ENCODE measurements at regions of chr14 and their contacts with region 1.

Region 1: DNA sequence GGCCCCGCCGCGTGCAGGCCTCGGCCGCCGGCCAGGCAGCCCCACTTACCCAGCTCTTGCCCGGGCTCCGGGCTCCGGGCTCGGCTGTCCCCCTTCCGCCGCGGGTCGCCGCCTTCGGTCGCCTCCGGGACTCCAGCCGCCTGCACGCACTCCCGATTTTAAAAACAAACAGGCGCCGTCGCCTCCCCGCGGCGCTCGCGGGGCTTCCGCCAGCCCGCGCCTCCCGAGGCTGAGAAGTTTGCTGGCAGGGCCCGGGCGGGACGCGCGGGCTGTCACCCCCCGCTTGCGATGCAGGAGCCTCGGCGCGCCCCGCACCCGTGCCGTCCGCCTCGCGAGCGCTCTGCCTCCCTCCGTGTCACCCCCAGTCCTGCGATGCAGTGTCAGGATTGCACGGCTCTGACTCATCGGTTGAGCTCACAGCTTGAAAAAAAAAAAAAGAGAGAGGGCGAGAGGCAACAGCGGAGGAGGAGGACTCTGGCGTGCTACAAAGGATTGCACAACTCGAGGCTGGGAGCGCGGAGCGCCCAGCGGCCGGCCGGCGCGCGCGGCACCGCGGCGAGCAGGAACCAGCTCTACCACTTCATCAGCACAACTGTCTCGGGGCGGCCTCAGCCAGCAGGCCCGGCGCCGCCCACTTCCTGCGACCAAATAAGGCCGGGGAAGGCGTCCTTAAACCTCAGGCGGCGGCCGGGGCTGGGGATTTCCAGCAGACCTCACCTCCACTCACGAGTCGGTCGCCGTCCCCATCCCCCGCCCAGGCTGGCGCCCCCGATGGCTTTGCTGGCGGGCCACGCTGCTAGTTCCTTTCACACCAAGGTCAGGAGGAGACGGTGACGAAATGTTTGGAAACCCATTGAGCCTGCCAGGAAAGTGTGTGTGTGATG is 45.8 kb upstream of the PNMA1 start:
- DNase-seq: peak; percentile 63 to 95 (median 72)
- ATAC-seq: peak; percentile 81
- H3K4me3 ChIP-seq: peak overlapping the region; percentile 76
- H3K27ac ChIP-seq: peak overlapping the region; percentile 92
- H3K4me1 ChIP-seq: peaks cover 65 to 73% of the 10 kb centered on the region in 2 experiments
- H3K27me3 ChIP-seq: no peaks in the 10 kb centered on the region
- CTCF ChIP-seq: no peak; a peak in 1 of 6 replicates
- EP300 ChIP-seq: peak; percentile 19; the same call in 1 of the 2 replicates
- POLR2A ChIP-seq: peak; percentile 86
- RAD21 ChIP-seq: peak in 1 of 2 experiments; percentile 20; a peak in 1 of 4 replicates

Region 2: GRCh38 chr14:73728717-73729330 is 31.1 kb before region 1 on chr14:
- CTCF ChIA-PET with region 1: interaction called, 3 read pairs
- POLR2A ChIA-PET with region 1: interaction called, 6 read pairs
- in situ Hi-C with region 1: no loop called
- intact Hi-C with region 1: loop called (anchors 2 kb)
- DNase-seq: peak; percentile 75 to 89 (median 78)
- ATAC-seq: peak; percentile 79
- H3K4me3 ChIP-seq: no peak overlapping the region
- H3K27ac ChIP-seq: peak overlapping the region; percentile 67
- H3K4me1 ChIP-seq: peaks cover 41% of the 10 kb centered on the region in 2 experiments
- H3K27me3 ChIP-seq: no peaks in the 10 kb centered on the region
- CTCF ChIP-seq: peak; percentile 83 to 89 (median 85)
- EP300 ChIP-seq: no peak
- POLR2A ChIP-seq: no peak
- RAD21 ChIP-seq: peak; percentile 86 to 92

Region 3: DNA sequence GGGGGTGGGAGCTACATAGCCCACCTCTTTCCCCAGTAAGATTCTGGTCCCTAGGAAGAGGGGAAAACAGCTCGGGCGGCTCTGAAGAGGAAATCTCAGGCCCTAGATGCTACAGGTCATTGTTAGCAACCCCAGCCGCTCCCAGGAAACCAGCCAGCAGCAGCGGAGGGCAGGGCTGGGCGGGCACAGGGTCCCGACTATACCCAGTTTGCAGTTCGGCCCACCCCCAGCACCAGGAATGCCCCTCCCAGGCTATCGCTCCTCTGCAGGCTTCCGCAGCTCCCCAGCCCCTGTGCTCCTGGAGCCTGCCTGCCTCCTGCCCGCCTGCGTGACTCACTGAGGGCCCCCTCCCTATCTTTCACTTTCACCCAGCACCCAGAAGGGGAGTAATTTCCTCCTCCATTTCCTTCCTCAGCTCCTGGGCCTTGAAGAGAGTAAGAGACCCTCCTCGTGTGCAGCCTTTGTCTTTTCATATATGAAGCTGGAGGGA is 18.5 kb before region 1 on chr14:
- CTCF ChIA-PET with region 1: no interaction called
- POLR2A ChIA-PET with region 1: interaction called, 80 read pairs
- in situ Hi-C with region 1: no loop called
- intact Hi-C with region 1: loop called (anchors 2 kb)
- DNase-seq: peak; percentile 90 to 93 (median 92)
- ATAC-seq: peak; percentile 82
- H3K4me3 ChIP-seq: peak overlapping the region; percentile 17; the same call in 1 of the 2 replicates
- H3K27ac ChIP-seq: peak overlapping the region; percentile 86
- H3K4me1 ChIP-seq: peaks cover 56 to 78% of the 10 kb centered on the region in 2 experiments
- H3K27me3 ChIP-seq: no peaks in the 10 kb centered on the region
- CTCF ChIP-seq: peak; percentile 13 to 15 (median 15); a peak in 2 of 6 replicates
- EP300 ChIP-seq: peak; percentile 85
- POLR2A ChIP-seq: no peak
- RAD21 ChIP-seq: no peak

Region 4: GRCh38 chr14:73771848-73772638 is 12.1 kb after region 1 on chr14:
- CTCF ChIA-PET with region 1: no interaction called
- POLR2A ChIA-PET with region 1: interaction called, 11 read pairs
- in situ Hi-C with region 1: no loop called
- intact Hi-C with region 1: no loop called
- DNase-seq: peak; percentile 81 to 94 (median 86)
- ATAC-seq: peak; percentile 91
- H3K4me3 ChIP-seq: no peak overlapping the region
- H3K27ac ChIP-seq: peak overlapping the region; percentile 76
- H3K4me1 ChIP-seq: peaks cover 38 to 45% of the 10 kb centered on the region in 2 experiments
- H3K27me3 ChIP-seq: no peaks in the 10 kb centered on the region
- CTCF ChIP-seq: no peak
- EP300 ChIP-seq: peak; percentile 83
- POLR2A ChIP-seq: no peak
- RAD21 ChIP-seq: peak in 1 of 2 experiments; percentile 2; a peak in 1 of 4 replicates

Region 5: DNA sequence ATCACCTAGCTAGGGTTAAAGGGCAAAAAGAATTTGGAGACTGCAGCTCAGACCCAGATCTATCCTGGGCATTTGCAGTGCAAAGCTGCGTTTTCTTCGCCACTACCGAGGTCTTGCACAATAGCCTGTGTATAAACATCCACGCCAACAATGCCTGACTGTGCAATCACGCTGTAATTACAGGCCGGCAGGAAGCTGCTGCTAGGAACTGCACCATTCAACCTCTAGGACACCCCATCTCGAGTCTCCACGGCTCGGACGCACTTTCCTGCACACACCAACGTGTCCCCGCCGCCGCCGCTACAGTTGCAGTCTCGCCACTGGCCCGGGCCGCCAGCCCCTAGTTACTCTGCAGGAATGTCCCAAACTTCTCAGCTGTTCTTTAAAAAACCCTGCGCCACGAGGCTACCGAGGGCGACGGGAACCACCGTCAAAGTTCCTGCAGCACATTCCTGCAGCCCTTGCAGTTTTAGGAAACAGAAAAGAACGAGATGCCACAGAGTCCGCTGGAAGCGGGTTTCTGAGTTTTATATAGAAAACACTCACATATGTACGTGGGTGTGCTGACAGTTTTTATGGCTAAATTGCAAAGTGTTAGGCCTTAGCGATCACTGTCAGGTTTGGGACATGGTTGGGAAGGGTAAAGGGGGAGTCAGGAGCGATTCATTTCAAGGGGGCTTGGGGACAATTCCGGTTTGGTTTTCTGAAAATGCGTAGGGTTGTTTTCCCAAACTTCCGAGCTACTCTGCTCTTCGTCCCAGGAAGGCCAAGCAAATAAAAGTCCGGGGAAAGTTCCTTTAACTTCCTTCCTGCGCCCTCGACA is 26.1 kb after region 1 on chr14:
- CTCF ChIA-PET with region 1: no interaction called
- POLR2A ChIA-PET with region 1: interaction called, 31 read pairs
- in situ Hi-C with region 1: no loop called
- intact Hi-C with region 1: loop called (anchors 2 kb)
- DNase-seq: peak; percentile 46 to 77 (median 50)
- ATAC-seq: peak; percentile 85
- H3K4me3 ChIP-seq: peak overlapping the region; percentile 70
- H3K27ac ChIP-seq: peak overlapping the region; percentile 97
- H3K4me1 ChIP-seq: peaks cover 43 to 49% of the 10 kb centered on the region in 2 experiments
- H3K27me3 ChIP-seq: no peaks in the 10 kb centered on the region
- CTCF ChIP-seq: peak in 1 of 3 experiments; percentile 17; a peak in 1 of 6 replicates
- EP300 ChIP-seq: peak; percentile 63
- POLR2A ChIP-seq: peak; percentile 63
- RAD21 ChIP-seq: no peak; a peak in 1 of 4 replicates

Region 6: GRCh38 chr14:73851644-73852382 is 91.9 kb after region 1 on chr14 and contains the start of gene PTGR2:
- CTCF ChIA-PET with region 1: no interaction called
- POLR2A ChIA-PET with region 1: interaction called, 11 read pairs
- in situ Hi-C with region 1: no loop called
- intact Hi-C with region 1: no loop called
- DNase-seq: peak; percentile 90 to 94 (median 91)
- ATAC-seq: peak; percentile 93
- H3K4me3 ChIP-seq: peak within 1 kb of the TSS; percentile 45
- H3K27ac ChIP-seq: peak within 1 kb of the TSS; percentile 82
- H3K4me1 ChIP-seq: peaks cover 4 to 12% of the 10 kb centered on the region in 2 experiments; a peak in 4 of 5 replicates
- H3K27me3 ChIP-seq: no peaks in the 10 kb centered on the region
- CTCF ChIP-seq: 0 out of 6 replicates have a peak, but pooled peaks of 1 of the 3 experiments have one; percentile 7
- EP300 ChIP-seq: no peak
- POLR2A ChIP-seq: peak; percentile 88
- RAD21 ChIP-seq: no peak
- polyA plus RNA-seq, gene PTGR2: 13.0 to 20.1 TPM

Region 7: DNA sequence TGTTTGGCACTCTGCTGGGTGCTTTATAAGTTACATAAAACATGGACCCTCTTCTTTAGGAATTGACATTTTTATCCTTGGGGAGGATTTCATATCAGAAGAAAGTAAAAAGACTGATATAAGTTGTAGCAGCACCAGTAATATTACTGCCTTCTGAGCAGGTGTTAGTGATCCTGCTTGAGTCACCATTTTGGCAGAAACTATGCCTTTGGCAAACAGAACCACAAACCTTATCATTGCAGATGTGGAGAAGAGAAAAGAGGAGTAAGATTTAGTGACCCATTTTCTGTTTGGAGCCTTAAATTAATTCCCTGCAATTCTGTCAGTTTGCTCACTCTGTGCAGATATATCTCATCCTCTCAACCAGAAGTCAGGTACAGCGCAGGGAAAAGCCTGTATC is 149.7 kb after region 1 on chr14:
- CTCF ChIA-PET with region 1: no interaction called
- POLR2A ChIA-PET with region 1: no interaction called
- in situ Hi-C with region 1: no loop called
- intact Hi-C with region 1: no loop called
- DNase-seq: no peak
- ATAC-seq: no peak
- H3K4me3 ChIP-seq: no peak overlapping the region
- H3K27ac ChIP-seq: no peak overlapping the region
- H3K4me1 ChIP-seq: no peaks in the 10 kb centered on the region
- H3K27me3 ChIP-seq: no peaks in the 10 kb centered on the region
- CTCF ChIP-seq: no peak
- EP300 ChIP-seq: no peak
- POLR2A ChIP-seq: no peak
- RAD21 ChIP-seq: no peak

Region 8: DNA sequence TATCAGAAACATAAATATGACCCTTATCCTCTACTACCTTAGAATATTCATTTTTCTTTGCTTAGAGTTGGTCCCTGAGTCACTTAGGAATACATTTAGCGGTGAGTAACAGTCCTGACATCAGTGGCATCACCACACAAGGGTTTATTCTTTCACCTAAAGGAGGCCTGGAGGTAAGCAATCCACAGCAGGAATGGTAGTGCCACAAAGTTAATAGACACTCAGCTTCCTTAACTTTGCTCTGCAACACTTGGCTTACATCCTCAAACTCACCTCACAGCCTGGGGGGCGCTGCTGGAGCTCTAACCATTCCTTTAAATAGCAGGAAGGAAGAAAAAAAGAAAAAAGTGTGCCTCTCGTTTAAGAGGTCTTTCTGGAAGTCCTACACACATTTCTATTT is 288.3 kb after region 1 on chr14:
- CTCF ChIA-PET with region 1: no interaction called
- POLR2A ChIA-PET with region 1: no interaction called
- in situ Hi-C with region 1: no loop called
- intact Hi-C with region 1: no loop called
- DNase-seq: peak in 3 of 4 experiments; percentile 12 to 45 (median 24)
- ATAC-seq: peak; percentile 62; the same call in 2 of the 3 replicates
- H3K4me3 ChIP-seq: no peak overlapping the region
- H3K27ac ChIP-seq: no peak overlapping the region
- H3K4me1 ChIP-seq: no peaks in the 10 kb centered on the region
- H3K27me3 ChIP-seq: no peaks in the 10 kb centered on the region
- CTCF ChIP-seq: peak; percentile 16 to 47 (median 31); a peak in 3 of 6 replicates
- EP300 ChIP-seq: no peak
- POLR2A ChIP-seq: no peak
- RAD21 ChIP-seq: peak in 1 of 2 experiments; percentile 7; a peak in 1 of 4 replicates

Measured in K562 (cell line).